GM12878 (cell line): ENCODE measurements at regions of chr7 and their contacts with region 1.

Region 1: DNA sequence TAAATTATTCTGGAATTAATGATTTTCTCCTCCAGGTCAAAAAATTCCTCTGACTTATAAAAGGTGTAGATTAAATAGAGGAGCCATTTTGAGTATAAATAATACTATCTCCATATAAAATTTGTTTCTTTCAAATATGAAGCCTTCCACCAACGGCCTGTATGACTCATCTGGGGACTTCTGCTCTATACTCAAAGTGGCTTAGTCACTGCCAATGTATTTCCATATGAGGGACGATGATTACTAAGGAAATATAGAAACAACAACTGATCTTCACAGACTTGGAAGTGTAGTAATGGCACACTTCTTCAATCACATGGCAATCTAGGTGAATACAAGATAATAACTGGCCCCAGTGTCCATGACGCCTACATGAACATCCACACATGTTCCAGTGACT is 335.6 kb upstream of the HGF start:
- DNase-seq: no peak
- ATAC-seq: peak; percentile 66
- H3K4me3 ChIP-seq: no peak overlapping the region
- H3K27ac ChIP-seq: no peak overlapping the region
- H3K4me1 ChIP-seq: no peaks in the 10 kb centered on the region
- H3K27me3 ChIP-seq: no peaks in the 10 kb centered on the region
- CTCF ChIP-seq: no peak
- EP300 ChIP-seq: no peak
- POLR2A ChIP-seq: no peak
- RAD21 ChIP-seq: no peak

Region 2: GRCh38 chr7:81956520-81956919 is 148.9 kb before region 1 on chr7:
- CTCF ChIA-PET with region 1: no interaction called
- POLR2A ChIA-PET with region 1: no interaction called
- RAD21 ChIA-PET with region 1: no interaction called
- SMC1A ChIA-PET with region 1: no interaction called
- in situ Hi-C with region 1: no loop called
- intact Hi-C with region 1: no loop called
- DNase-seq: peak; percentile 30
- ATAC-seq: peak; percentile 98
- H3K4me3 ChIP-seq: no peak overlapping the region
- H3K27ac ChIP-seq: no peak overlapping the region
- H3K4me1 ChIP-seq: no peaks in the 10 kb centered on the region
- H3K27me3 ChIP-seq: no peaks in the 10 kb centered on the region
- CTCF ChIP-seq: peak; percentile 52 to 72 (median 66); a peak in 5 of 6 replicates
- EP300 ChIP-seq: no peak
- POLR2A ChIP-seq: no peak
- RAD21 ChIP-seq: peak; percentile 99

Region 3: DNA sequence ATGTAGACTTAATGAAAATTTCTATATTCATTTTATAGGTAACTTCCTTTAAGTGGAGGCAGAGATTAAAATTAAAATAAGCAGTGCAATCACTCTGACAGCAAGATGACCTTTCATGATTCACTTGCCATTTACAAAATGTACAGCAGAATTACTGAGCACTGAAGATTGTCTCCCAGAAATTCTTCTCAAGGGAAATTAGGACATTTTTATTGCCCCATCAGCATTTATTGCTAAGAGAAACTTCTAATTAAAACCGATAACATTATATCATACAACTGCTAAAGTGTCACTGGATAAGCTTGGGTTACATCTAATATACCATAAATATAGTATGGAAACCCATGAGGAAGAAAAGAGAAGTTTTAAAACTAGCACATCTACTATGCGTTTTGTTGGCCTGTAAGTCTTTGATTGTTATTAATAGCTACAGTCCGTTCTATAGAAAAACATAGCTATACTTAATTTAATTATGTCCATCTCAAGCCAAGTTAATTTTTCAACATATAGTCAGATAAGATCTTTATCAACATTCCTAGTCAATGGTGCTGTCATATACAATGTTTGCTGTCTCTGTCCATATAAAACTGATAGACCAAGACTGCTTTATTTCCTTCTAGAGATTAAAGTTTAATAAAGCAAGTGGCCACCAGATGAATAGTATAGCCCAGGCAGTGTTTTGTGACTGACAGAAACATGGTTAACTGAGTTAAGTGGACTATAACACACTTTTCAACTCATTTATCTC is 118.6 kb before region 1 on chr7:
- CTCF ChIA-PET with region 1: no interaction called
- POLR2A ChIA-PET with region 1: no interaction called
- RAD21 ChIA-PET with region 1: no interaction called
- SMC1A ChIA-PET with region 1: no interaction called
- in situ Hi-C with region 1: no loop called
- intact Hi-C with region 1: no loop called
- DNase-seq: no peak
- ATAC-seq: no peak
- H3K4me3 ChIP-seq: no peak overlapping the region
- H3K27ac ChIP-seq: no peak overlapping the region
- H3K4me1 ChIP-seq: no peaks in the 10 kb centered on the region
- H3K27me3 ChIP-seq: no peaks in the 10 kb centered on the region
- CTCF ChIP-seq: no peak
- EP300 ChIP-seq: no peak
- POLR2A ChIP-seq: no peak
- RAD21 ChIP-seq: no peak

Region 4: DNA sequence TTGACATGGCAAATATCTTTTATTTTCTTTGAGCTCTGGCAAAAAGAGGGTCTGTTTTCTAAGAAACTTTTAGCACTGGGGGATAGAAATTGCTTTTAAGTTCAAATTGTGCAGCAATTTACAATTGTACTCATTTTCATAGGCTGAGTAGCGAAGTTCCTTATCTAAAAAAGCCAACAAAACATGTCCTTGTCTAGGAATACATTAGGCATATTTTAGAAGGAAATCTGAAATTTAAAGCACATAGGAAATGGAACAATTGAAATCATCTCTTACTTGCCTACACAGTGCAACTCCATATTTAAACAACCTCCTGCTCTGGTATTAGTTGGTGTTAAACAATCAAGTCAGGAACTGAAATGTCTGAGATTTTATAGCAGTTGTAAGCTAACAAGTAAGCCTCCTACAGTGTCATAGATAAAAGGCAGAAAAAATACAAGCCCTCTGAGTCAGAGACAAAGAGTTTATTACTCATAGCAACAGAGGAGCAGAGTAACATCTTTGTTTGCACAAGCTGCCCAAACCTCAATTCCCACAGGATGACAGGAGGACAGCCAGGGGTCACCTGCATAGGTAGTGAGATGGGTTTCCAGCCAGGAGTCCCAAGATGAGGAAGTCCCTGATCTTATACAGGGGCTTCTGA is 55.5 kb before region 1 on chr7:
- CTCF ChIA-PET with region 1: interaction called, 7 read pairs
- POLR2A ChIA-PET with region 1: interaction called, 8 read pairs
- RAD21 ChIA-PET with region 1: interaction called, 45 read pairs
- SMC1A ChIA-PET with region 1: interaction called, 16 read pairs
- in situ Hi-C with region 1: no loop called
- intact Hi-C with region 1: loop called (anchors 5 kb)
- DNase-seq: no peak
- ATAC-seq: peak; percentile 70
- H3K4me3 ChIP-seq: no peak overlapping the region
- H3K27ac ChIP-seq: no peak overlapping the region
- H3K4me1 ChIP-seq: no peaks in the 10 kb centered on the region
- H3K27me3 ChIP-seq: no peaks in the 10 kb centered on the region
- CTCF ChIP-seq: no peak
- EP300 ChIP-seq: peak in 1 of 2 experiments; percentile 8; a peak in 1 of 4 replicates
- POLR2A ChIP-seq: no peak
- RAD21 ChIP-seq: no peak